Activated CD4-positive, alpha-beta memory T cell treated with anti-CD3 and anti-CD28 coated beads for 36 hours (primary cell): ENCODE measurements at regions of chr13 and their contacts with region 1.

Region 1: DNA sequence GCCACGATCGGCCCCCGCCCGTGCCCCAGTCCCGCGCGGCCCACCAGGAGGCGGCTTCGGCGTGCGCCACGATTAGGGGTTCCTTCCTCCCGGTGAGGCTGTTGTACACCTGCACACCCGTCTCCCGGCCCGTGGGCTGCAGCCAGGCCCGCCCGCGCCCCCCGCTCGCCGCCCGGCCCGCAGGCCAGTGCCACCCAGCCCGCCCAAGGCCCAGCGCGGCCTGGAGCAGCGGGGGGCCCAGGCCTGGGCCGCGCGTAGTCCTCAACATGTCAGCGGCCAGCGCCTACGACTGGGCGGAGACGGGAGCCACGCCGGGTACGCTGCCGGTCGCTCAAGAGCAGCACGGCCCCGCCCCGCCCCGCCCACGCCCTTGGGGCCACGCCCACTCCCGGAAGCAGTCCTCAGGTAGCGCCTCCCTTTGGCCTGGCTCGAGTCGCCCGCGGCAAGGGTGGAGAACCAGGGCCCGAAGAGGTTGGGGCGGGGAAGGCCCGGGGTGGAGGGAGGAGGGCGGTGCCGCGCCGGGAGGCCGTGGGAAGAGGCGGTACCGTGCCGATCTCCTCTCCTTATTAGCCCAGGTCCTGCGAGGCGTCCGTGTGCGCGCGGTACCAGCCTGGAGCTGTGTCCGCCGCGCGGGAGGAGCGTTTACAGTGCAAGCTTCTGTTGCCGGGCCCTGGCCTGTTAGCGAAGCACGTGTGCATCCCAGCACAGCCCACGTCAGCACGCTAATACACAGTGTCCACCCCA is at the start of gene CARS2:
- DNase-seq: peak; percentile 97
- H3K4me3 Mint-ChIP-seq: peak within 1 kb of the TSS; percentile 87
- H3K27ac Mint-ChIP-seq: peak within 1 kb of the TSS; percentile 83
- H3K4me1 Mint-ChIP-seq: peaks cover 30% of the 10 kb centered on the region
- H3K27me3 Mint-ChIP-seq: no peaks in the 10 kb centered on the region
- total RNA-seq, gene CARS2: 54.6 to 59.3 TPM

Region 2: DNA sequence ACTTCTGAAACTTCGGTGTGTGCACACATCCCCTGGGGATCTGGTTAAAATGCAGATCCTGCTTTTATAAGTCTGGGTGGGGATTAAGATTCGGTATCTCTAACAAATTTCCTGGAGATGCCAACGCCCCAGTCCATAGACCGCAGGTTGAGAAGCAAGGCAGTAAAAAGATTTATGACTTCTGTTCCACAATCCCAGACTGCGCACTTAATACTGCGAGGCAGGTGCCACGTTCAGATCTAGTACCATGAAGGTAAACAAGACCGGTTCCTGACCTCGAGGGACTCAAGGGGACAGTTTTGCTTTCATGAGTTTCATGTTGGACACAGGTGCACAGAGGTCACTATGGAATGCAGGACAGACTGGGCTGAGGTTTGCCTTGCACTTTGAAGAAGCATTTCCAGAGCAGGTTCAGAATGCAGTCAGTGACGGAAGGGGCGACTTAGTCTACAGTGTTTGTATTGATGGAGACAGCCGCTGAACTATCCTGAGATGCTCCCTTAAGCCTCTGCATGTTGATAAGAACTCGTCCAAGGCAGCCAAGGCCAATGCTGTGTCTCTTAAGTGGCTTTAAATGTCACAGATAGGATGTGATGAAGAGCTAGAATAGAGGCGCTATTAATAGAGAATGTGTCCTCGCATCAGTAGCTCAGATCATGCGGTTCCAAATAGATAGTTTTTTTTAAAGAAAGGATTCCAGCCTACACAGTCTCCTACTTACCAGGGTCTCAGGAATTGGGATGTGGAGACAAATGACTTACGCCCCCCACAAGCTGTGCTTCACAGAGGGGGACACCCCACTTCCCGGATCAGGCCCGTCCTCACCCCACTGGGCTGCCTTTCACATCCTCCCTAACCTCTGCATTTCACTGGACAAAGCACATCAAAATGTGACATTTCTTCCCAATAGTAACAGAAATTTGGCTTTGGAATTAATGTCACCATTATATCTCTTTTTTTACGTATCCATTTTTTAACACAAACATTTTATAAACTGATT is 822.5 kb before region 1 on chr13:
- CTCF ChIA-PET with region 1: no interaction called
- POLR2A ChIA-PET with region 1: no interaction called
- intact Hi-C with region 1: no loop called
- DNase-seq: no peak
- H3K4me3 Mint-ChIP-seq: no peak overlapping the region
- H3K27ac Mint-ChIP-seq: no peak overlapping the region
- H3K4me1 Mint-ChIP-seq: no peaks in the 10 kb centered on the region
- H3K27me3 Mint-ChIP-seq: peaks cover 9% of the 10 kb centered on the region

Region 3: DNA sequence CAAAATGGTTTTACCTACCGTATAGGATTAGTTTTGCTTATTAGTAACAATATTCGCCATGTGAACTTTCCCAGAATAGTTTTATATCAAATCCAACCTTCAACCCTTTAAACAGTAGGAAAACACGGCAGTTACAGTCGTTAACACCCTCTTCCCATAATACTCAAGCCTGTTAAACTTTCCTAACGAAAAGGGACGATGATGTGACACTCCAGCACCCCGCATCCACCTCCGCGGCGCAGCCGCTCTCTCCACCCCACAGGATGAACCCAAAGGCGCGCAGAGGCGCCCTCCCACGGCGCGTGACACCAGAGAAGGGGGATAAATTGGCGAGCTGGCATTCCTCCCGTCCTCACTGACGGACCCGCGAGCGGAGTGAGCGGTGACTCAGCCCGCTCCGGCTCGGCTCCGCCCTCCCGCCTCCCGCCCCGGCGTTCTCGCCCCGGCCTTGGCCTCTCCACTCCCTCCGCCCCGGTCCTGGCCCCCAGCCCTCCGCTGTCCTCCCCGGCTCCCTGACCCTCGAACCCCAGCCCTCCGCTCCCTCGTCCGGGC is 1881.3 kb after region 1 on chr13:
- CTCF ChIA-PET with region 1: no interaction called
- POLR2A ChIA-PET with region 1: no interaction called
- intact Hi-C with region 1: loop called (anchors 10 kb)
- DNase-seq: peak; percentile 85
- H3K4me3 Mint-ChIP-seq: peak overlapping the region; percentile 92
- H3K27ac Mint-ChIP-seq: peak overlapping the region; percentile 91
- H3K4me1 Mint-ChIP-seq: peaks cover 48% of the 10 kb centered on the region
- H3K27me3 Mint-ChIP-seq: no peaks in the 10 kb centered on the region